H1 (cell line): ENCODE measurements at regions of chr16 and their contacts with region 1.

Region 1: GRCh38 chr16:81066681-81067080 is 10.4 kb downstream of the C16orf46 start:
- DNase-seq: no peak
- H3K4me3 ChIP-seq: no peak overlapping the region
- H3K27ac ChIP-seq: no peak overlapping the region
- H3K4me1 ChIP-seq: peaks cover 0 to 3% (median under 1%) of the 10 kb centered on the region in 4 experiments; a peak in 3 of 7 replicates
- H3K27me3 ChIP-seq: no peaks in the 10 kb centered on the region
- CTCF ChIP-seq: no peak
- EP300 ChIP-seq: no peak
- POLR2A ChIP-seq: no peak
- RAD21 ChIP-seq: no peak

Region 2: GRCh38 chr16:80997139-80997798 is 69.4 kb before region 1 on chr16:
- CTCF ChIA-PET with region 1: no interaction called
- POLR2A ChIA-PET with region 1: no interaction called
- DNase-seq: no peak
- H3K4me3 ChIP-seq: no peak overlapping the region
- H3K27ac ChIP-seq: no peak overlapping the region
- H3K4me1 ChIP-seq: no peaks in the 10 kb centered on the region
- H3K27me3 ChIP-seq: no peaks in the 10 kb centered on the region
- CTCF ChIP-seq: no peak
- EP300 ChIP-seq: no peak
- POLR2A ChIP-seq: no peak
- RAD21 ChIP-seq: no peak

Region 3: DNA sequence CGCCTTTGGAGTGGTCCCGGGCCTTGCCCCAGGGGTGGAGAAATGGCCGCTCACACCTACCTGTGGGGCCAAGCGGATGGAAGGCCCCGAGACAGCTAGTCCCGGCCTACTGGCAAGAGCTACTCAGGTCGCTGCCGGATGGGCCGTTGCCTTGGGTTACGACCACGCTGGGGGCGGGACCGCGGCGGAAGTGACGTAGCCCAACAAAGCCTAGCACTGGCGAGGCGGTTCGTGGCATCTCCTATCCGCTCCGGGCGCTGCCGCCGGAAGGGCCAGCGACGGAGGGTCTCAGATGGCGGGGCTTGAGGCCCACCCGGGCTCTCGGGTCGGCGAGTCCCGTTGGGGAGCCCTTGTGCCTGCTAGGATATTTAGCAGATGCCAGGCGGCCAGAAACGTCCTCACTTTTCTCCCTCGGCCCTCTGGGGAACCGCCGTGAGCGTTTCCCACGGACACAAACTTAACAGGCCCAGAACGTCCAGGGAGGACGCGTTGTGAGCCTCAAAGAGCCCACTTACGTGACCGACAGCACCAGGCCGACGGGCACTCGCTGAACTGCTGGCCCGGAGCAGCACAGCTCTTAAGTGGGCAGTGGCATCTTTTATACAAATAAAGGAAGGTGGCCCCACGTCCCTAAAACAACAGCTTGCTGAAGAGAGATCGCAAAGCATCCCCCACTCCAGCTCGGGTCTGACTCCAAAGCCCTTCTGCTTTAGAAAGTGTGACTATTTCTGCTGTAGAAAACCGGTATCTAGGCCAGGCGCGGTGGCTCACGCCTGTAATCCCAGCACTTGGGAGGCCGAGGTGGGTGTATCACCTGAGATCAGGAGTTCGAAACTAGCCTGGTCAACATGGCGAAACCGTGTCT is 10.6 kb after region 1 on chr16 and contains the start of gene C16orf46:
- CTCF ChIA-PET with region 1: interaction called, 5 read pairs
- POLR2A ChIA-PET with region 1: interaction called, 11 read pairs
- DNase-seq: peak; percentile 90 to 100
- H3K4me3 ChIP-seq: peak within 1 kb of the TSS; percentile 64 to 90 (median 80)
- H3K27ac ChIP-seq: peak within 1 kb of the TSS; percentile 84
- H3K4me1 ChIP-seq: peaks cover 0 to 2% (median 0%) of the 10 kb centered on the region in 4 experiments; a peak in 3 of 7 replicates
- H3K27me3 ChIP-seq: no peaks in the 10 kb centered on the region
- CTCF ChIP-seq: no peak
- EP300 ChIP-seq: no peak
- POLR2A ChIP-seq: peak; percentile 93 to 94
- RAD21 ChIP-seq: no peak; a peak in 1 of 4 replicates
- total RNA-seq, gene C16orf46: 0.60 and 1.1 TPM in 2 replicates

Region 4: GRCh38 chr16:81106811-81107503 is 40.3 kb after region 1 on chr16:
- CTCF ChIA-PET with region 1: no interaction called
- POLR2A ChIA-PET with region 1: no interaction called
- DNase-seq: no peak
- H3K4me3 ChIP-seq: no peak overlapping the region
- H3K27ac ChIP-seq: no peak overlapping the region
- H3K4me1 ChIP-seq: no peaks in the 10 kb centered on the region
- H3K27me3 ChIP-seq: no peaks in the 10 kb centered on the region
- CTCF ChIP-seq: no peak
- EP300 ChIP-seq: no peak
- POLR2A ChIP-seq: no peak
- RAD21 ChIP-seq: no peak